Breast epithelium (tissue), 4 donors: ENCODE measurements at regions of chr14 and their contacts with region 1.

Region 1: GRCh38 chr14:70096866-70097265 is 91.9 kb downstream of the SLC8A3 start:
- DNase-seq: no peak
- H3K4me3 ChIP-seq: no peak overlapping the region
- H3K27ac ChIP-seq: no peak overlapping the region
- H3K4me1 ChIP-seq: no peaks in the 10 kb centered on the region
- H3K27me3 ChIP-seq: peaks cover 0 to 44% of the 10 kb centered on the region in 2 donors
- CTCF ChIP-seq: no peak
- POLR2A ChIP-seq: no peak

Region 2: GRCh38 chr14:71060825-71061455 is 964.1 kb after region 1 on chr14:
- intact Hi-C with region 1: loop called (anchors 5 kb)
- DNase-seq: no peak
- H3K4me3 ChIP-seq: no peak overlapping the region
- H3K27ac ChIP-seq: no peak overlapping the region
- H3K4me1 ChIP-seq: no peaks in the 10 kb centered on the region
- H3K27me3 ChIP-seq: no peaks in the 10 kb centered on the region
- CTCF ChIP-seq: no peak
- POLR2A ChIP-seq: no peak